GM12878 (cell line): ENCODE measurements at regions of chr12 and their contacts with region 1.

Region 1: GRCh38 chr12:68807576-68808387 is at the start of gene MDM2:
- DNase-seq: peak; percentile 94
- ATAC-seq: peak; percentile 84
- H3K4me3 ChIP-seq: peak within 1 kb of the TSS; percentile 83
- H3K27ac ChIP-seq: peak within 1 kb of the TSS; percentile 100
- H3K4me1 ChIP-seq: no peaks in the 10 kb centered on the region; the same call in 1 of the 2 replicates
- H3K27me3 ChIP-seq: no peaks in the 10 kb centered on the region
- CTCF ChIP-seq: peak; percentile 63 to 76 (median 72)
- EP300 ChIP-seq: peak; percentile 27 to 65; a peak in 2 of 4 replicates
- POLR2A ChIP-seq: peak; percentile 88
- RAD21 ChIP-seq: peak; percentile 30
- polyA plus RNA-seq, gene MDM2: 48.2 to 65.8 TPM

Region 2: GRCh38 chr12:68331869-68332727 is 475.7 kb before region 1 on chr12 and contains the start of gene MDM1:
- CTCF ChIA-PET with region 1: no interaction called
- POLR2A ChIA-PET with region 1: no interaction called
- RAD21 ChIA-PET with region 1: no interaction called
- SMC1A ChIA-PET with region 1: no interaction called
- in situ Hi-C with region 1: no loop called
- intact Hi-C with region 1: loop called (anchors 2 kb)
- DNase-seq: peak; percentile 92
- ATAC-seq: peak; percentile 98
- H3K4me3 ChIP-seq: peak within 1 kb of the TSS; percentile 83
- H3K27ac ChIP-seq: peak within 1 kb of the TSS; percentile 57
- H3K4me1 ChIP-seq: no peaks in the 10 kb centered on the region
- H3K27me3 ChIP-seq: no peaks in the 10 kb centered on the region
- CTCF ChIP-seq: no peak
- EP300 ChIP-seq: no peak
- POLR2A ChIP-seq: peak; percentile 82
- RAD21 ChIP-seq: no peak
- polyA plus RNA-seq, gene MDM1: 10.1 to 10.6 TPM

Region 3: GRCh38 chr12:68497702-68498101 is 310.1 kb before region 1 on chr12:
- CTCF ChIA-PET with region 1: no interaction called
- POLR2A ChIA-PET with region 1: no interaction called
- RAD21 ChIA-PET with region 1: no interaction called
- SMC1A ChIA-PET with region 1: no interaction called
- in situ Hi-C with region 1: no loop called
- intact Hi-C with region 1: no loop called
- DNase-seq: peak; percentile 50
- ATAC-seq: peak; percentile 82
- H3K4me3 ChIP-seq: no peak overlapping the region
- H3K27ac ChIP-seq: no peak overlapping the region
- H3K4me1 ChIP-seq: peaks cover 27% of the 10 kb centered on the region
- H3K27me3 ChIP-seq: no peaks in the 10 kb centered on the region
- CTCF ChIP-seq: no peak
- EP300 ChIP-seq: no peak
- POLR2A ChIP-seq: no peak
- RAD21 ChIP-seq: no peak

Region 4: DNA sequence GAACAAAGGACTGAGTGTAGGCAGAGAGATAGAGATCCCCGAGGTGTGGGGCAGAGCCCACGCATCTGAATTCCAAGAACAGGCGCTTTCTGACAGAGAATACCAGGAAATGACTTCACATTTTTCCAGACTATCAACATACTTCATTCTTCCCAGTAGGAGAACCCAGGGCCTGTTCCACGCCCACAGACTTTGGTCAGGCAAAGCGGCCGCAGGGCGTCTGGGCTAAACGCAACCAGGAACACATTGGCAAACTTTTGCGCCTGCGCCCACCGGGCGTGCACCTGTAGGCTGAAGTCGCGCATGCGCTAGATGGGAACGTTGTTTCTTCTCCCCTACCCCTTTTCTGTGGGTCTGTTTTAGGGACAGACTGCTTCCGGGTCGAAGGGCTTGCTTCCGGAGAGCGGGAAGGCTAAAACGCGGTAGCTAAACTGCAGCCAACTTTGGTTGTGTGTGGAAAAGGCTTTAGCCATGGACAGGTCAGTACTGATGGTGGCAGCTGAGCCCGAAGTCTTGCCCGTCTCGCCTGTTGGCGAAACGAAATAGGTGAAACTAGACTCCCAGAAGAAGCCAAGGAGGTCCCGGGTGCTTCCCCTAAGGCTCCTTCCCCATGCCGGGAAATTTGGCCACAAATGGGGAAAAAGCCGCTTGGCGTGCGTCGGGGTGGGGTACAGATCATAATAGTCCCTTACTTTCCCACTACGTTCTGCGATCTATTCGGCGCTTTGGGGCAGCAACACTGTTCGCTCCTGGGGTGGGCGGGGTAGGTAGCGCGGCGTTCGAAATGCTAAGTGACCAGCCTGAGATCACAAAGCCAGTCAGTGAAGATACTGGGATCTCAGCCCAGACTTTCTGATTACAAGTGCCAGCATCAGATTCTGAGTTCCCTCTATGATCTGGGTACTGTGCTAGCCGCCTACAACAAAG is 120.9 kb before region 1 on chr12 and contains the start of gene NUP107:
- CTCF ChIA-PET with region 1: no interaction called
- POLR2A ChIA-PET with region 1: no interaction called
- RAD21 ChIA-PET with region 1: no interaction called
- SMC1A ChIA-PET with region 1: no interaction called
- in situ Hi-C with region 1: no loop called
- intact Hi-C with region 1: loop called (anchors 5 kb)
- DNase-seq: peak; percentile 95
- ATAC-seq: peak; percentile 97
- H3K4me3 ChIP-seq: peak within 1 kb of the TSS; percentile 91
- H3K27ac ChIP-seq: peak within 1 kb of the TSS; percentile 83
- H3K4me1 ChIP-seq: peaks cover 9% of the 10 kb centered on the region
- H3K27me3 ChIP-seq: no peaks in the 10 kb centered on the region
- CTCF ChIP-seq: no peak
- EP300 ChIP-seq: no peak
- POLR2A ChIP-seq: peak; percentile 94
- RAD21 ChIP-seq: 0 out of 2 replicates have a peak, but pooled peaks have one; percentile 10
- polyA plus RNA-seq, gene NUP107: 79.4 to 85.2 TPM

Region 5: DNA sequence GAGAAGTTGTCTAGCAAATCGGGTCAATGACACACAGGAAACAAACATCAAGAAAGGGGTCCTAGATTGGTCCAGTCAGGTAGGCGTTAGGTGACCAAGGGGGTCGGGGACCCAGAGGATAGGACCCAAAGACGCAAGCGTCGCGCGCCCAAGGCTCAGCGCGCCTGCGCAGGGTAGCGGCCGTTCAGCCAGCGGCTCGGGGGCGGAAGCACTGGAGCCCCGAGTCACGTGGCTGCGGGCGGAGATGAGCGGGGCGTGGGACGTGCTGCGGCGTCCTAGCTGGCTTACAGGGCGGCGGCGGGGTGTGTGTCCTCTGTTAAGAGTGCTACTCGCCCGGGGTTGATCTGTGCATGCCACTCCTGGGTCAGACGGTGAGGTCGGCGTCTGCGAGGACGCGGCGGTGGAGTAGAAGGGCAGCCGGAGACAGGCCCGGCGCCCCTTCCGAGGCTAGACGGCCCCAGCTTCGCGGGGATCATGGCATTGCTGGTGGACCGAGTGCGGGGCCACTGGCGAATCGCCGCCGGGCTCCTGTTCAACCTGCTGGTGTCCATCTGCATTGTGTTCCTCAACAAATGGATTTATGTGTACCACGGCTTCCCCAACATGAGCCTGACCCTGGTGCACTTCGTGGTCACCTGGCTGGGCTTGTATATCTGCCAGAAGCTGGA is 61.7 kb before region 1 on chr12 and contains the start of gene SLC35E3:
- CTCF ChIA-PET with region 1: interaction called, 17 read pairs
- POLR2A ChIA-PET with region 1: interaction called, 6 read pairs
- RAD21 ChIA-PET with region 1: interaction called, 25 read pairs
- SMC1A ChIA-PET with region 1: interaction called, 22 read pairs
- in situ Hi-C with region 1: no loop called
- intact Hi-C with region 1: loop called (anchors 1 kb)
- DNase-seq: peak; percentile 77
- ATAC-seq: peak; percentile 99
- H3K4me3 ChIP-seq: peak within 1 kb of the TSS; percentile 84
- H3K27ac ChIP-seq: peak within 1 kb of the TSS; percentile 75
- H3K4me1 ChIP-seq: no peaks in the 10 kb centered on the region
- H3K27me3 ChIP-seq: no peaks in the 10 kb centered on the region
- CTCF ChIP-seq: no peak
- EP300 ChIP-seq: no peak
- POLR2A ChIP-seq: peak; percentile 91; the same call in 1 of the 2 replicates
- RAD21 ChIP-seq: no peak
- polyA plus RNA-seq, gene SLC35E3: 3.6 to 6.0 TPM

Region 6: DNA sequence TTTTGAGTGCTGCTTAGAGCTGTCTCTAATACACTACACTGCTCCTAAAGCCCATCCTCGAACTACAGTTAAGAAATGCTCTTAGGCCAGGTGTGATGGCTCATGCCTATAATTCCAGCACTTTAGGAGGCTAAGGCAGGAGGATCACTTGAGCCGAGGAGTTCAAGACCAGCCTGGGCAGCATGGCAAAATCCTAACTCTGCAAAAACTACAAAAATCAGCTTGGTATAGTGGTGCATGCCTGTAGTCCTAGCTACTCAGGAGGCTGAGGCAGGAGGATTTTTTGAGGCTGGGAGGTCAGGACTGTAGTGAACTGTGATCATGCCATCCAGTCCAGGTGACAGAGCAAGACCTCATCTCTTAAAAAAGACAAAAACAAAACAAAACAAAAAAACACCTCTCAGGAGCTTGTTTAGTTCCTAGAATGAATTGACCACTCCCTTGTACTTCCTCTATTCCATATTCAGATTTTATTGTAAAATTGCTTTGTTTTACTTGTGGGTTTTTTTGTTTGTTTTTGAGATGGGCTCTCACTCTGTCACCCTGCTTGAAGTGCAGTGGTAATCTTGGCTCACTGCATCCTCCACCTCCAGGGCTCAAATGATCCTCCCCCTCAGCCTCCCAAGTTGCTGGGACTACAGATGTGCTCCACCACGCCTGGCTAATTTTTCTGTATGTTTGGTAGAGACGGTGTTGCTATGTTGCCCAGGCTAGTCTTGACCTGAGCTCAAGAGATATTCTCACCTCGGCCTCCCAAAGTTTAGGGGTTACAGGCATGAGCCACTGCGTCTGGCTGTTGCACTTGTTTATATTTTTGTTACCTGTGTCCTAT is 13.8 kb after region 1 on chr12:
- CTCF ChIA-PET with region 1: interaction called, 7 read pairs
- POLR2A ChIA-PET with region 1: interaction called, 5 read pairs
- RAD21 ChIA-PET with region 1: interaction called, 5 read pairs
- SMC1A ChIA-PET with region 1: interaction called, 12 read pairs
- in situ Hi-C with region 1: no loop called
- intact Hi-C with region 1: no loop called
- DNase-seq: no peak
- ATAC-seq: peak; percentile 58
- H3K4me3 ChIP-seq: no peak overlapping the region
- H3K27ac ChIP-seq: no peak overlapping the region
- H3K4me1 ChIP-seq: no peaks in the 10 kb centered on the region
- H3K27me3 ChIP-seq: no peaks in the 10 kb centered on the region
- CTCF ChIP-seq: no peak
- EP300 ChIP-seq: no peak
- POLR2A ChIP-seq: 0 out of 2 replicates have a peak, but pooled peaks have one; percentile 33
- RAD21 ChIP-seq: no peak

Region 7: GRCh38 chr12:68831272-68831671 is 23.5 kb after region 1 on chr12:
- CTCF ChIA-PET with region 1: interaction called, 156 read pairs
- POLR2A ChIA-PET with region 1: interaction called, 4 read pairs
- RAD21 ChIA-PET with region 1: interaction called, 7 read pairs
- SMC1A ChIA-PET with region 1: interaction called, 20 read pairs
- in situ Hi-C with region 1: no loop called
- intact Hi-C with region 1: no loop called
- DNase-seq: no peak
- ATAC-seq: peak; percentile 7; the same call in 2 of the 3 replicates
- H3K4me3 ChIP-seq: no peak overlapping the region
- H3K27ac ChIP-seq: no peak overlapping the region
- H3K4me1 ChIP-seq: no peaks in the 10 kb centered on the region
- H3K27me3 ChIP-seq: no peaks in the 10 kb centered on the region
- CTCF ChIP-seq: no peak
- EP300 ChIP-seq: no peak
- POLR2A ChIP-seq: peak; percentile 63
- RAD21 ChIP-seq: no peak